CD4-positive, alpha-beta T cell (primary cell): ENCODE measurements at regions of chr14 and their contacts with region 1.

Region 1: DNA sequence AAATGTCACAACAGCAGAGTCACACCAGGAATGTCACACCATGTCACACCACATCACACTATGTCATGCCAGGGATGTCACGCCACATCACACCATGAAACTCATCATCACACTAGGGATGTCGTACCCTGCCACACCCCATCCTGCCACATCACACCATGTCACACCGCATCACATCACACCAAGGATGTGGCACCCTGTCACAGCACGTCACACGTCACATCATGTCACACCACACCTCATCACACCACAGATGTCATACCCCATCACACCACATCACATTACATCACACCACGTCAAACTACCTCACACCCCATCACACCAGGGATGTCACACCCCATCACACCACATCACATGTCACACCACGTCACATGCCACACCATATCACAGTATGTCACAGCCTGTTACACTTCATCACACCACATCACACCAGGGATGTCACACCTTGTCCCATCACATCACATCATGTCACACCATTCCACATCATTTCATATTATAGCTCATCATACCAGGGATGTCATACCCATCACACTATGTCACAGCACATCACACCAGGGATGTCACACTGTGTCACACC is 90.9 kb downstream of the TMEM121 start:
- DNase-seq: no peak
- ATAC-seq: no peak
- H3K4me3 ChIP-seq: no peak overlapping the region
- H3K4me3 Mint-ChIP-seq: no peak overlapping the region
- H3K27ac ChIP-seq: no peak overlapping the region
- H3K27ac Mint-ChIP-seq: no peak overlapping the region
- H3K4me1 ChIP-seq: no peaks in the 10 kb centered on the region
- H3K4me1 Mint-ChIP-seq: no peaks in the 10 kb centered on the region
- H3K27me3 ChIP-seq: no peaks in the 10 kb centered on the region
- H3K27me3 Mint-ChIP-seq: peaks cover 9% of the 10 kb centered on the region
- CTCF ChIP-seq: no peak

Region 2: GRCh38 chr14:105627711-105628110 is 10.4 kb after region 1 on chr14:
- CTCF ChIA-PET with region 1: no interaction called
- POLR2A ChIA-PET with region 1: no interaction called
- intact Hi-C with region 1: loop called in 1 of 2 experiments (anchors 2 kb)
- DNase-seq: peak in 1 of 14 experiments; percentile 6
- ATAC-seq: no peak
- H3K4me3 ChIP-seq: no peak overlapping the region
- H3K4me3 Mint-ChIP-seq: no peak overlapping the region
- H3K27ac ChIP-seq: no peak overlapping the region
- H3K27ac Mint-ChIP-seq: no peak overlapping the region
- H3K4me1 ChIP-seq: no peaks in the 10 kb centered on the region
- H3K4me1 Mint-ChIP-seq: no peaks in the 10 kb centered on the region
- H3K27me3 ChIP-seq: peaks cover 0 to 9% of the 10 kb centered on the region in 2 experiments
- H3K27me3 Mint-ChIP-seq: peaks cover 20% of the 10 kb centered on the region
- CTCF ChIP-seq: no peak

Region 3: GRCh38 chr14:105760691-105761346 is 143.5 kb after region 1 on chr14:
- CTCF ChIA-PET with region 1: no interaction called
- POLR2A ChIA-PET with region 1: no interaction called
- intact Hi-C with region 1: loop called in 1 of 2 experiments (anchors 2 kb)
- DNase-seq: no peak
- ATAC-seq: no peak
- H3K4me3 ChIP-seq: no peak overlapping the region
- H3K4me3 Mint-ChIP-seq: no peak overlapping the region
- H3K27ac ChIP-seq: no peak overlapping the region
- H3K27ac Mint-ChIP-seq: no peak overlapping the region
- H3K4me1 ChIP-seq: no peaks in the 10 kb centered on the region
- H3K4me1 Mint-ChIP-seq: no peaks in the 10 kb centered on the region
- H3K27me3 ChIP-seq: peaks cover 0 to 2% of the 10 kb centered on the region in 2 experiments
- H3K27me3 Mint-ChIP-seq: peaks cover 6% of the 10 kb centered on the region
- CTCF ChIP-seq: no peak